ENCODE measurements at regions of chr15 and their contacts with region 1.

Region 1: GRCh38 chr15:29935276-29936020 is 113.2 kb upstream of the TJP1 start:
- DNase-seq: peak in 8 of 42 donors; percentile 38 to 78 (median 48)

Region 2: GRCh38 chr15:29883126-29883525 is 52.3 kb before region 1 on chr15:
- intact Hi-C with region 1: no loop called
- DNase-seq: no peak

Region 3: GRCh38 chr15:30030350-30030749 is 94.9 kb after region 1 on chr15:
- intact Hi-C with region 1: loop called (anchors 5 kb)
- DNase-seq: no peak